Naive thymus-derived CD4-positive, alpha-beta T cell (primary cell): ENCODE measurements at regions of chr11 and their contacts with region 1.

Region 1: GRCh38 chr11:105100206-105100605 is 39.4 kb downstream of the CARD18 start:
- DNase-seq: peak in 2 of 9 donors; percentile 3 to 4
- ATAC-seq: peak; percentile 87
- H3K4me3 ChIP-seq: peak overlapping the region; percentile 53
- H3K4me3 Mint-ChIP-seq: peak overlapping the region in 8 of 10 donors; percentile 16 to 87 (median 56)
- H3K27ac ChIP-seq: no peak overlapping the region
- H3K27ac Mint-ChIP-seq: peak overlapping the region in 6 of 9 donors; percentile 1 to 93 (median 4)
- H3K4me1 ChIP-seq: peaks cover 6 to 18% of the 10 kb centered on the region in 2 donors
- H3K4me1 Mint-ChIP-seq: peaks cover 23 to 43% (median 31%) of the 10 kb centered on the region in 7 donors
- H3K27me3 ChIP-seq: no peaks in the 10 kb centered on the region
- H3K27me3 Mint-ChIP-seq: no peaks in the 10 kb centered on the region

Region 2: GRCh38 chr11:104968355-104968855 is 131.8 kb before region 1 on chr11 and contains the start of gene CASP4:
- CTCF ChIA-PET with region 1: no interaction called
- POLR2A ChIA-PET with region 1: no interaction called
- intact Hi-C with region 1: loop called in 1 of 2 experiments (anchors 5 kb)
- DNase-seq: peak in 7 of 9 donors; percentile 18 to 57 (median 48)
- ATAC-seq: peak; percentile 82
- H3K4me3 ChIP-seq: peak within 1 kb of the TSS; percentile 67
- H3K4me3 Mint-ChIP-seq: peak within 1 kb of the TSS; percentile 90 to 99 (median 96)
- H3K27ac ChIP-seq: peak within 1 kb of the TSS; percentile 89
- H3K27ac Mint-ChIP-seq: peak within 1 kb of the TSS; percentile 94 to 100 (median 97)
- H3K4me1 ChIP-seq: peaks cover 16 to 36% of the 10 kb centered on the region in 2 donors
- H3K4me1 Mint-ChIP-seq: peaks cover 35 to 47% (median 43%) of the 10 kb centered on the region in 7 donors
- H3K27me3 ChIP-seq: no peaks in the 10 kb centered on the region
- H3K27me3 Mint-ChIP-seq: no peaks in the 10 kb centered on the region
- total RNA-seq, gene CASP4: 60.7 to 94.7 (median 76.9) TPM

Region 3: GRCh38 chr11:105071089-105071732 is 29.0 kb before region 1 on chr11:
- CTCF ChIA-PET with region 1: no interaction called
- POLR2A ChIA-PET with region 1: no interaction called
- intact Hi-C with region 1: loop called (anchors 2 kb)
- DNase-seq: peak in 6 of 9 donors; percentile 1 to 38 (median 28)
- ATAC-seq: peak; percentile 49
- H3K4me3 ChIP-seq: peak overlapping the region; percentile 18
- H3K4me3 Mint-ChIP-seq: peak overlapping the region; percentile 78 to 93 (median 84)
- H3K27ac ChIP-seq: peak overlapping the region; percentile 63
- H3K27ac Mint-ChIP-seq: peak overlapping the region; percentile 59 to 97 (median 84)
- H3K4me1 ChIP-seq: peaks cover 0 to 6% of the 10 kb centered on the region in 2 donors
- H3K4me1 Mint-ChIP-seq: peaks cover 14 to 38% (median 24%) of the 10 kb centered on the region in 7 donors
- H3K27me3 ChIP-seq: no peaks in the 10 kb centered on the region
- H3K27me3 Mint-ChIP-seq: peaks cover 0 to 3% (median 0%) of the 10 kb centered on the region in 5 donors

Region 4: GRCh38 chr11:105110688-105111030 is 10.5 kb after region 1 on chr11:
- CTCF ChIA-PET with region 1: no interaction called
- POLR2A ChIA-PET with region 1: no interaction called
- intact Hi-C with region 1: no loop called
- DNase-seq: no peak
- ATAC-seq: no peak
- H3K4me3 ChIP-seq: no peak overlapping the region
- H3K4me3 Mint-ChIP-seq: peak overlapping the region in 2 of 10 donors; percentile 7 to 28
- H3K27ac ChIP-seq: no peak overlapping the region
- H3K27ac Mint-ChIP-seq: no peak overlapping the region
- H3K4me1 ChIP-seq: no peaks in the 10 kb centered on the region
- H3K4me1 Mint-ChIP-seq: peaks cover 7 to 17% (median 13%) of the 10 kb centered on the region in 7 donors
- H3K27me3 ChIP-seq: no peaks in the 10 kb centered on the region
- H3K27me3 Mint-ChIP-seq: peaks cover 12 to 28% (median 18%) of the 10 kb centered on the region in 5 donors